ENCODE measurements at regions of chr6 and their contacts with region 1.

Region 1: DNA sequence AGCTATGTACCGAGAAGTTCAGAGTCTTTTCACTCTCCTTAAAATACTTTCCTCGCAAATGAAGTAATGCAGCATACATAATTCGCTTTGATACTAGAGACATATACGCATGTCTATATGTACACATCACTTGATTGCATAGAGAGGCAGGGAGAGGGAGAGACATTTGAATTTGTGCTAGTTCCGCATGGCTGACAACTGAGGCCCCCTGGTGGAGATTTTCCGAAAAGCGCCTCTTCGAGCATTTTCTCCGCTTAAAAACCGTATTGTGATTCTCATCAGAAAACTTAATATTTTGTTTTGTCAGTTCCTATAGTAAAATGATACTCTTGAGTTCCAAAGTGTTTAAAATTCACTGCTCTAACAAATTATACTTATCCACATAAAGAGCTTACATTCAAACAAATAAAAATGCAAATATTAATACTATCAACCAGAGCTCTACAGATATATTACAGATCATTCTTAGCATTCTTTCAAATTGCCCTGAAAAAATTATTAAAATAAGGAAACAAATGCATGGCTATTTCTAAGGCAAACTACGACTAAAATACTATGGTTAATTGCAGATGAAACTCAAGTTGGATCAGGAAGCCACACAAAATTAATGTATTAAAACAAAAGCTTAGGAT is 637 bp downstream of the MYLK4 start:
- DNase-seq: no peak
- H3K4me3 ChIP-seq: peak overlapping the region in 2 of 4 donors; percentile 8 to 9
- H3K27ac ChIP-seq: no peak overlapping the region
- H3K4me1 ChIP-seq: peaks cover 0 to 10% (median 7%) of the 10 kb centered on the region in 4 donors
- H3K27me3 ChIP-seq: no peaks in the 10 kb centered on the region
- CTCF ChIP-seq: peak; percentile 81 to 91 (median 81)
- EP300 ChIP-seq: no peak
- POLR2A ChIP-seq: no peak

Region 2: GRCh38 chr6:1596088-1596852 is 1153.8 kb before region 1 on chr6:
- intact Hi-C with region 1: loop called (anchors 10 kb)
- DNase-seq: no peak
- H3K4me3 ChIP-seq: peak overlapping the region in 3 of 4 donors; percentile 8 to 47 (median 25)
- H3K27ac ChIP-seq: no peak overlapping the region
- H3K4me1 ChIP-seq: peaks cover 6 to 10% (median 8%) of the 10 kb centered on the region in 4 donors
- H3K27me3 ChIP-seq: peaks cover 0 to 47% (median 7%) of the 10 kb centered on the region in 4 donors
- CTCF ChIP-seq: peak; percentile 93 to 96 (median 94)
- EP300 ChIP-seq: no peak
- POLR2A ChIP-seq: no peak

Region 3: DNA sequence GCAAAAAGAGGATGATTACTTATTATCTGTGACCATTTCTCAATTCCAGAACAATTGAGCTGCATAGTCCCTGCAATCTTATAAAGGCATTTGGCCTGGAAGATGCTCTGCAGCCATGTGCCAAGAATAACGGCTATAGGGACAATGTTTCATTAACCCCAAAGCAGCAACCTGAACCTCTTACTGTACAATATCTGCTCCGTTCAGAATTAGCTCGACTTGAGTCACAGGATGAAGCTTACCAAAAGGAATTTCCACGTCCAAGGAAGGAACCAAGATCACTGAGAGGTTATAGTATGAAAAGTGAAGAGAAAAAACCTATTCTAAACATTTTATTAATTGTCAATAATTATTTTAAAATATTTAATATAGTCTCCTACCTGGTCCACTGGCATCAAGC is 337.4 kb before region 1 on chr6:
- intact Hi-C with region 1: no loop called
- DNase-seq: no peak
- H3K4me3 ChIP-seq: no peak overlapping the region
- H3K27ac ChIP-seq: no peak overlapping the region
- H3K4me1 ChIP-seq: no peaks in the 10 kb centered on the region
- H3K27me3 ChIP-seq: no peaks in the 10 kb centered on the region
- CTCF ChIP-seq: no peak
- EP300 ChIP-seq: no peak
- POLR2A ChIP-seq: no peak

Region 4: GRCh38 chr6:2818593-2818992 is 68.5 kb after region 1 on chr6:
- intact Hi-C with region 1: no loop called
- DNase-seq: peak; percentile 24
- H3K4me3 ChIP-seq: peak overlapping the region in 1 of 4 donors; percentile 5
- H3K27ac ChIP-seq: peak overlapping the region; percentile 46 to 70 (median 53)
- H3K4me1 ChIP-seq: peaks cover 17 to 30% (median 22%) of the 10 kb centered on the region in 4 donors
- H3K27me3 ChIP-seq: no peaks in the 10 kb centered on the region
- CTCF ChIP-seq: no peak
- EP300 ChIP-seq: no peak
- POLR2A ChIP-seq: no peak

Region 5: DNA sequence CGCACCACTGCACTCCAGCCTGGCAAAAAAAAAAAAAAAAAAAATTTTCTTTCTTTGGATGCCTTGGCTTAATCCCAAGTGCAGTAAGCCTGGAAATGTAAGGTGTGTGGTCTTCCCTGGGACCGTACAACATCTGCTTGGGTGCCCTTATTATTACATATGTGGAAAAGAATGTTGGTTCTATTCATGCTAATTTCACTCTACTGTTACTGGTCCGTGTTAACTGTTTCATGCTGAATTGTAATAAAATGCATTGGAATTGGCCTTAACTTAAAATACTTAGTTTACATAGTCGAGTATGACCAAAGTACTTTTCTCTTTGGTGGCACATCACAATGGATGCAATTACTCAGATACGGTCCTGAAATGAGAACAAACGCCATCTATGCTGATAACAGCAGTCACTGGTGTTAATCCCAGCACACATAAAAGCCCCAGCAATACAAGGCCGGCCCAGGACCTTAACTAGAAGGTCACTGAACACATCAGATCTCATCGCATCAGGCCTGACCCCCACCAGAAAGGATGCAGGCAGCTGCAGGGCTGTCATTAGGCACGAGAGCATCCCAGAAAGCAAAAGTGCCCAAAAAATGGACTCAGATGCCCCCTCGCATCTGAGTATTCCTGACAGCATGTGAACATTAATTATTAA is 220.1 kb after region 1 on chr6:
- intact Hi-C with region 1: no loop called
- DNase-seq: no peak
- H3K4me3 ChIP-seq: peak overlapping the region; percentile 72 to 94 (median 84)
- H3K27ac ChIP-seq: peak overlapping the region; percentile 95 to 99 (median 98)
- H3K4me1 ChIP-seq: peaks cover 10 to 50% (median 48%) of the 10 kb centered on the region in 4 donors
- H3K27me3 ChIP-seq: no peaks in the 10 kb centered on the region
- CTCF ChIP-seq: no peak
- EP300 ChIP-seq: no peak
- POLR2A ChIP-seq: no peak

Region 6: GRCh38 chr6:3108746-3109414 is 358.8 kb after region 1 on chr6:
- intact Hi-C with region 1: no loop called
- DNase-seq: no peak
- H3K4me3 ChIP-seq: no peak overlapping the region
- H3K27ac ChIP-seq: no peak overlapping the region
- H3K4me1 ChIP-seq: no peaks in the 10 kb centered on the region
- H3K27me3 ChIP-seq: no peaks in the 10 kb centered on the region
- CTCF ChIP-seq: no peak
- EP300 ChIP-seq: no peak
- POLR2A ChIP-seq: no peak